HEK293T (cell line): ENCODE measurements at regions of chr14 and their contacts with region 1.

Region 1: GRCh38 chr14:21014761-21015190 is 10.1 kb downstream of the NDRG2 start:
- DNase-seq: peak; percentile 79

Region 2: DNA sequence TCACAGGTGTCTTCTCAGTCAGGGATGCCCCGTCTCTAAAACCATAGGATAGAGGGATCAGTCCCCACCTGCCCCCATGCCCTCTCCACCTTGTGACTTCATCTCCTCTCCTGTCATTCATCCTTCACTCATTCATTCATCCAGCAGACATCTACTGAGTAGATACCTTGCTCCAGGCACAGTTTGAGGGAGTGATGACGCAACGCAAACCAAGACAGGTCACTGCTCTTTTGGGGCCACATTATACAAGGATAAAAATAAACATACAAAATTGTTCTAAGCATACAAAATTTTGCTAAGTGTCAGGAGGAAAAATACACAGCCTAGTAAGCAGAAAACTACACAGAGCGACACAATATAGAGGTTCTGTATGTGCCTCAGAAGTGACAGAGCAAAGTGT is 92.3 kb before region 1 on chr14:
- CTCF ChIA-PET with region 1: no interaction called
- POLR2A ChIA-PET with region 1: no interaction called
- DNase-seq: no peak

Region 3: DNA sequence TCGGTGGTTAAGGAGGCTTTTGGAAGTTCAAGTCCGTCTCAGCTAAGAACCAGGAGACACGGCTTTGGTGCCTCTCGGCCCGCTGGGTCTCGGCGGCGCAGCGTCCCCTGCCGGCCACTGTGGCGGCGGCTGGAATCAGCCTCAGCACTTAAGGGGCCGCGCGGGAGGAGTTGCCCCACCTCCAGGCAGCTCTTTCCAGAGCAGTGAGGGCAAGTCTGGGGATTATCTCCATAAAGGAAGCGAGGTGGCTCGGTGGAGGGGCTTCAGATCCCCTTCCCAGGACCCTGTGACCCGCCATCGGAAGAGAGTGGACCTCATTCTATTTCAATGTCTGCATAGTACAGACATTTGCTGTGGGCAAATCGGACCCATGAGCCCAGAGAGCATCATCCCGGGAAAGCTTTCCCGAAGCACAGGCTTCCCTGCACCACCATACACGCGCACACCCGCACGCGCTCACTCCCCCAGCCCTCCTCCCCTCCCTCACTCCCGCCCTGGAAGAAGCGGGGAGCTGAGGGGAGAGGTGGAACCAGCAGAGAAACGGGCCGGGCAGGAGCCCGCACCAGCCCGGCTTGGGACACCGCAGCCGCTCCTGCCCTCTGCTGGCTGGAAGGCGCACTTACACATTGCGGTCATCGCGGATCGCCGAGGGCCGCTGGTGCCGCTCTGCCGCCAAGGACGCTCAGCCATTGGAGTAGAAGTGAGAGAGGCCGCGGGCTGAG is 43.6 kb before region 1 on chr14:
- CTCF ChIA-PET with region 1: interaction called, 14 read pairs
- POLR2A ChIA-PET with region 1: interaction called, 6 read pairs
- DNase-seq: peak; percentile 85

Region 4: DNA sequence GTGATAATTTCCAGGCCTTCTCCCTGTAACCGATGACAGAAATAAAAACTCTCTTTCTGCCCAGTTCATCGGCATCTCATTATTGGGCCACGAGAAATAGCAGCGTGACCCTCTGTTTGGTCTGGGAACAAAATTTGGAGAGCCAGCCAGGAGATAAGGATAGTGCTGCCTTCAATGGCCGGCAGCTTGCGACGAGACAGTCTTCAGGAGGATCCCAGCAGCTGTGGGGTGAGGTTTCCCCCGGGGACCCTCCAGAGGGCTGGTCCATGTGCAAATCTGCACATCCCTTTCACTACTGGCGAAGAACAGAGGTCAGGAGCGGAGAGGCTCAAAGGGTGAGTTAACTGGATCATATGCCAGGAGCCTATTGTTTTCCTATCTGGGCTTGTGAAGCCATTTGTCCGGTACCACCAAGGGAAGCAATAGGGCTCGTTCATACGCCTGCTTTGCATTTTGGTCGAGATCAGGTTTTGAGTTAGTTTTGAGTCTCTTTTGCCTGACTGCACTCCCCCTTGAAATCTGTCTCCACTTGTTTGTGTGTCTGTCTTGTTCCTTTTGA is 10.9 kb before region 1 on chr14:
- CTCF ChIA-PET with region 1: interaction called, 26 read pairs
- POLR2A ChIA-PET with region 1: no interaction called
- DNase-seq: no peak

Region 5: DNA sequence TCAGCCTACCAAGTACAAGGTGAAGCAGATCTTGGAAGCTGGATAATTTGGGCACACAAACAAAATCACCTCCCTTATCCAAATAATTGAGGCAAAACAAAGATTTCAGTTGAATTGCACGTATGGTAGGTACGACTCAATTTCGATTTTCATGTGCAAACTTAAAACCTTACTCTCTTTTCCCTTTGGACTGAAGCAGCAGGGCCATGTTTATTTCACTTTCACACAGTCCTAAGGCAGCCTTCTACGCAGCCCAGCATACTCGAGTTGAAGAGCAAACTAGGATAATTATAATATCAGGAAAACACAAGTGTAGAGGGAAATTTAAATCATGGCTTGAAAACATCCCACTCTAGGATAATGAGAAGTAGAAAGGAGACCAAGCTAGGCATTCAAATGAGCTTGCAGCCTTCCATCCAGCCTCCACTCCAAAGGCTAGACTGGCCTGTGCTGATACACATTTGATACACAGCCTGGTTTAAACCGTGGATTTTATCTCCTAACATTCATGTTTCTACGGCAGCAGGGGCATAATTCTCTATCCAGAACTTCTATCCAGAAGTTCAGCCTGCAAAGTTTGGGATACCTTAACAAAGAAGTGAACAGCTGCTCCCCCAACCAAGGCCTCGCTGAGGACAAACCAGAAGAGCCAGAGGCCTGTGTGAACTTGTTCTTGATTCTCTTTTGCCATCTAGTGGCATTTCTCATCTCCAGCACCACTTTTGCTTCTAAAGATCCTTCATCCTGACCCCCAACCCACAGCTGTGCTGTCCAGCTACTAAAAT is 25.0 kb after region 1 on chr14:
- CTCF ChIA-PET with region 1: interaction called, 98 read pairs
- POLR2A ChIA-PET with region 1: interaction called, 18 read pairs
- DNase-seq: peak; percentile 75

Region 6: DNA sequence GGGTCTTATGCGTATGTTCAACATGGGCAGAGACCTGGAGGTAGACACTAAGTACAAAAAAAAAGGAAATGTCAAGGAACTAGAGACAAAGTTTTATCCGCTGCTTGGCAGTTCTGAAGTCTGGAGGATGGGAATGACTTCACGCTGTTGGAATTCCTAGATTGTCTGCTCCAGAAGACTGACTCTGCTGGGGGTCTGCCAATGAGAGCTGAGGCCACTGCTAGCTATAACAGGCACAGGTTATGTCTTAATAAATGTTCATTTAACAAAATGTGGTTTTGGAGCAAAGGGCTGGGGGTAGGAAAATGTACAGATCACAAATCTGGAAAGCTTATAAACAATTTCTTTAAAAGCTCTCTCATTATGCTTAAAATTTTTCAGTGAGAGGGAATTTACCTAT is 48.7 kb after region 1 on chr14:
- CTCF ChIA-PET with region 1: interaction called, 19 read pairs
- POLR2A ChIA-PET with region 1: interaction called, 3 read pairs
- DNase-seq: peak; percentile 40

Region 7: GRCh38 chr14:21092273-21093011 is 77.7 kb after region 1 on chr14:
- CTCF ChIA-PET with region 1: interaction called, 32 read pairs
- POLR2A ChIA-PET with region 1: interaction called, 7 read pairs
- DNase-seq: peak; percentile 88

Region 8: DNA sequence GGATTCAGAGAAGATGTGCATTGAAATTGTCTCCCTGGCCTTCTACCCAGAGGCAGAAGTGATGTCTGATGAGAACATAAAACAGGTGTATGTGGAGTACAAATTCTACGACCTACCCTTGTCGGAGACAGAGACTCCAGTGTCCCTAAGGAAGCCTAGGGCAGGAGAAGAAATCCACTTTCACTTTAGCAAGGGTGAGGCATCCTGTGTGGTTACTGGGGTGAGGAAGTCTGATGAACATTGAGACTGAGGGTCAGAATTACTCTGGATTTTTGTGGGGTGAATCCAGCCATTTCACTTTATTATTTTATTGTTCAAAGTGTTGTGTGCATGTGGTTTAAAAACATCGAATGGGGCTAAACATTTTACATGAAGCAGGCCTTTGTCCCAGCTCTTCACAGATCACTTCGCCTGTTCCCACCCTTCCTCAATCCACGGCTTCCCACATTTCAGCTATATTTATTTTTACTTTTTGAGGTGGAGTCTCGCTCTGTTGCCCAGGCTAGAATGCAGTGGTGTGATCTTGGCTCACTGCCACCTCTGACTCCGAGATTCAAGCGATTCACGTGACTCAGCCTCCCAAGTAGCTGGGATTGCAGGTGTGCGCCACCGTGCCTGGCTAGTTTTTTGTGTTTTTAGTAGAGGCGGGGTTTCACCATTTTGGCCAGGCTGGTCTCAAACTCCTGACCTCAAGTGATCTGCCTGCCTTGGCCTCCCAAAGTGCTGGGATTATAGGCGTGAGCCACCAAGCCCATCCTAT is 328.4 kb after region 1 on chr14:
- CTCF ChIA-PET with region 1: no interaction called
- POLR2A ChIA-PET with region 1: no interaction called
- DNase-seq: no peak

Region 9: GRCh38 chr14:21367582-21368144 is 352.9 kb after region 1 on chr14:
- CTCF ChIA-PET with region 1: no interaction called
- POLR2A ChIA-PET with region 1: no interaction called
- DNase-seq: no peak